ENCODE measurements at regions of chr22 and their contacts with region 1.

Region 1: GRCh38 chr22:37608477-37609239 is at the start of gene GGA1:
- DNase-seq: peak; percentile 95 to 96
- H3K4me3 ChIP-seq: peak within 1 kb of the TSS; percentile 60
- H3K27ac ChIP-seq: peak within 1 kb of the TSS; percentile 99
- H3K4me1 ChIP-seq: peaks cover 43% of the 10 kb centered on the region
- H3K27me3 ChIP-seq: no peaks in the 10 kb centered on the region
- CTCF ChIP-seq: no peak
- total RNA-seq, gene GGA1: 99.2 and 102 TPM in 2 replicates

Region 2: GRCh38 chr22:37472418-37473006 is 136.1 kb before region 1 on chr22:
- CTCF ChIA-PET with region 1: no interaction called
- POLR2A ChIA-PET with region 1: no interaction called
- intact Hi-C with region 1: no loop called
- DNase-seq: peak in 1 of 2 experiments; percentile 56
- H3K4me3 ChIP-seq: no peak overlapping the region
- H3K27ac ChIP-seq: no peak overlapping the region
- H3K4me1 ChIP-seq: no peaks in the 10 kb centered on the region
- H3K27me3 ChIP-seq: no peaks in the 10 kb centered on the region
- CTCF ChIP-seq: peak; percentile 88

Region 3: DNA sequence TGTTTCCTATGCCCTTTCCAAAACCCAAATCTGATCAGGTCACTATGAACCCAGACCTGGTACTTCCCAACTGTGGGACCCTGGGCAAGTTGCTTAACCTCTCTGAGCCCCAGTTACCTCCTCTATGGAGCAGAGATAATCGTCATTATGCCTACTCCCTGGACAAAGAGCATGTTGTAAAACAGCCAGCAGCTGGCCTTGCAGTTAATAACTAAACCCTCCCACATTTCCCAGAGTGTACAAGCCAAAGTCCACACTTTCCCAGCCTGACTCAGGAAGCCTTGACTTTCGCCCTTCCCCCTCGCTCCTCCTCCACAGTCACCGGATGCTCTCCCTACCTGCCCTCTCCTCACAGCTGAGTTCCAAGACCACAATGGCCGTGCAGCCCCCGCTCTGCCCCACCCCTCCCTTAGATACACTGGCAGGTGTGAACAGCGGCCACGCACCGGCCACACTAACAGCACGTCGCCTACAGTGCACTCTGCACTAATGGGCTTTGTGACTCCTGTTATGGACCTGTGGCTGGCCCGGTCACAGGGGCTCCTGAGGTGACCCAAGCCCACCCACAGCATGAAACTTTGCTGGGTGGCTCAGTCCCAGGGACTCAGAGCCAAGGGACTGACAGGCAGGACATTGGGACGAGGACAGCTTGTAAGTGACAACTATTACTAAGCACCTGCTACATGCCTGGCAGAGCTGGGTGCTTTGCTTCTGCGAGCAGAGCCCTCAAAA is 106.9 kb before region 1 on chr22:
- CTCF ChIA-PET with region 1: no interaction called
- POLR2A ChIA-PET with region 1: no interaction called
- intact Hi-C with region 1: no loop called
- DNase-seq: no peak
- H3K4me3 ChIP-seq: no peak overlapping the region
- H3K27ac ChIP-seq: peak overlapping the region; percentile 52; the same call in 1 of the 2 replicates
- H3K4me1 ChIP-seq: peaks cover 43% of the 10 kb centered on the region
- H3K27me3 ChIP-seq: no peaks in the 10 kb centered on the region
- CTCF ChIP-seq: no peak

Region 4: DNA sequence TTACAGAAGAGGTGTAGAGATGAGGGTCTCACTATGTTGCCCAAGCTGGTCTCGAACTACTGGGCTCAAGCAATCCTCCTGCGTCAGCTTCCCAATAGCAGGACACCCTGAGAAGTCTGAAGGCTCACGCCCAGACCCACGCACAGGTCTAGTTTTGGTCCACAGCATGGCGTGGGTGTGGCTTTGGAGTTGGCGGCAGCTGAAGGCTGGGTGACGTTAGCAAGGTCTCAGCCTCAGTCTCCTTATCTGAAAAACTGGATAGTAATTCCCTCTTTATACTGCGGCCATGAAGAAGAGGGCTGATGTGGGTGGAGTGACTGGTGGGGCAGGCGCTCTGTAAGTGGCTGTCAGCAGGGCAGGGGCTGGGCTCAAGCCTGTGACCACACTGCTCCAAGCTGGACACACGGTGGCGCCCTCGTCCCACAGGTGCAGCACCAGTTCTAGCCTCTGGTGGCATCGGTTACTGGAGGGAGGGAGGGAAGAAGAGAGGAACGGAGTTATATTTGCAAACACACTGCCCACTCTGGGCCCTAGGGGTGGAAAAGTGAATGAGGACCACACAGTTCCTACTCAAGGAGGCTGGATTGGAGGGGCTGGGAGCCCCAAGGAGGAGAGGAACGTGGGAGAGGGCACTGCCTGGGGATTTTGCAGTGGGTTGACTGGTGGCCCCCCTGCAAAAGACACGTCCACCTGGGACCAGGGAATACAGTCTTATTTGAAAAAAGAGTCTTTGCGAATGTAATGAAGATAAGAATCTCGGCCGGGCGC is 69.9 kb before region 1 on chr22:
- CTCF ChIA-PET with region 1: interaction called, 12 read pairs
- POLR2A ChIA-PET with region 1: interaction called, 12 read pairs
- intact Hi-C with region 1: loop called (anchors 1 kb)
- DNase-seq: peak; percentile 92 to 95
- H3K4me3 ChIP-seq: no peak overlapping the region
- H3K27ac ChIP-seq: peak overlapping the region; percentile 46
- H3K4me1 ChIP-seq: peaks cover 60% of the 10 kb centered on the region
- H3K27me3 ChIP-seq: no peaks in the 10 kb centered on the region
- CTCF ChIP-seq: peak; percentile 99

Region 5: DNA sequence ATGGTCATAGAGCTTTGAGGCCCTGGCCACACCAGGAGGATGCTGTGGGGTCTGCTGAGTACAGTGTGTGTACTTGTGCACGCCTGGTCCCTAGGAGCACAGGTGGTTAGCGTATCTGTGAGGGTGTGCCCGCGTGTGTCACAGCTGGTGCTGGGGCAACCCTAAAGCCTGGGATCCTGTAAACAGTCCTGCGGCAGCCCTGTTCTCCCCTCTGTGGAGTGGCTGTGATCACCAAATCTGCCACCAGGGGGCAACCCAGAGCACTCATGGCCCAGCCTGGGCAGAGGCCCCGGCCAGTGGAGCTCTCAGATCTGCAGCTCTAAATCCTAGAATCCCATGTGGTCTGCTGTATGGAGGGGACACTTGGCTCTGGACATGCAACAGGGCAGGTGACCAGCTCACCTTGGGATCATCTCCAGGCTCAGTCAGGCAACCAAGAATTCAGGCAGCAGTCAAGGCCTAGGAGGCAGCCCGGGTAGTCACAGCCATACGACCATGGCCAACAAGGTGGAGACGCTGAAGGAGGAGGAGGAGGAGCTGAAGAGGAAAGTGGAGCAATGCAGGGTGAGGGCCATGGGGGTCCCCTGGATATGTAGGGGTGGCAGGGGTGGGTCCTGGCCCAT is 34.7 kb after region 1 on chr22:
- CTCF ChIA-PET with region 1: interaction called, 3 read pairs
- POLR2A ChIA-PET with region 1: no interaction called
- intact Hi-C with region 1: loop called (anchors 1 kb)
- DNase-seq: peak; percentile 65 to 86
- H3K4me3 ChIP-seq: no peak overlapping the region
- H3K27ac ChIP-seq: no peak overlapping the region
- H3K4me1 ChIP-seq: peaks cover 31% of the 10 kb centered on the region
- H3K27me3 ChIP-seq: no peaks in the 10 kb centered on the region
- CTCF ChIP-seq: peak; percentile 99

Region 6: GRCh38 chr22:37752466-37753087 is 143.9 kb after region 1 on chr22:
- CTCF ChIA-PET with region 1: no interaction called
- POLR2A ChIA-PET with region 1: no interaction called
- intact Hi-C with region 1: loop called (anchors 2 kb)
- DNase-seq: peak; percentile 100
- H3K4me3 ChIP-seq: no peak overlapping the region
- H3K27ac ChIP-seq: peak overlapping the region; percentile 95
- H3K4me1 ChIP-seq: peaks cover 74% of the 10 kb centered on the region
- H3K27me3 ChIP-seq: no peaks in the 10 kb centered on the region
- CTCF ChIP-seq: no peak; the same call in 1 of the 2 replicates

Region 7: DNA sequence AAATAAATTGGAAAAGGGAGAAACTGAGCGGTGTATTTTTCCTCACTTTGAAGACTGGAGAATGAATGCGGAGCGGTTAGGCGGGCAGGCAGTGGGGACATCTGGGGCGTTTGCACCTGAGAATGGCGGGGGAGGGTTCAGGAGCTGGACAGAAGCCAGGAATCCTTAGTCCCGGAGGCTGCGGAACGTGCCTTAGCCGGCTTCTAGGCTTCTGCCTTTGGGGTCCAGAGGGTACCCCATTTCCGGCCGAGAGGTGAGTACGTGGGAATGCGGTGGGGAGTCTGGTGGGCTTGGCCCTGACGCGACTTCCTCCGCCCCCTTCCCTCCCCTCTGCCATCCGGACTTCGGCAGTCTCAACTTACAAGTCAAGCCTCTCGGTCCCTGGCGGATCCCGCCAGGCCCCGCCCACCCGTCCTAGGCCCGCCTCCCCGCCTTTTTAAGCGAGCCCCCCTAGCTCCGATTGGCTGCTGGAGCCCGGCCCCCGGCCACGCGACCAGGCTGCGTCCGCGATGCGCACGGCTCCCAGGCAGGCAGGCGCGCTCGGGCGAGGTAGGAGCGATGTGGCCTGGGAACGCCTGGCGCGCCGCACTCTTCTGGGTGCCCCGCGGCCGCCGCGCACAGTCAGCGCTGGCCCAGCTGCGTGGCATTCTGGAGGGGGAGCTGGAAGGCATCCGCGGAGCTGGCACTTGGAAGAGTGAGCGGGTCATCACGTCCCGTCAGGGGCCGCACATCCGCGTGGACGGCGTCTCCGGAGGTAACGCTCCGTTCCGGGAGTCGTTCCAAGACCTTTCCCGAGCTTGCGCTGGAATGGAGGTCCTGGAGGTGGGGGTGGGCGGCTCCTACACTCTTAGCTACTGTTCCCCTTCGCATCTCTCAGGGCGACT is 199.0 kb after region 1 on chr22 and contains the start of gene GCAT:
- CTCF ChIA-PET with region 1: no interaction called
- POLR2A ChIA-PET with region 1: interaction called, 5 read pairs
- intact Hi-C with region 1: loop called (anchors 5 kb)
- DNase-seq: peak; percentile 96
- H3K4me3 ChIP-seq: peak within 1 kb of the TSS; percentile 100
- H3K27ac ChIP-seq: no peak within 1 kb of the TSS
- H3K4me1 ChIP-seq: peaks cover 18% of the 10 kb centered on the region
- H3K27me3 ChIP-seq: no peaks in the 10 kb centered on the region
- CTCF ChIP-seq: no peak
- total RNA-seq, gene GCAT: 32.3 and 37.7 TPM in 2 replicates

Region 8: GRCh38 chr22:37862570-37863325 is 254.1 kb after region 1 on chr22:
- CTCF ChIA-PET with region 1: interaction called, 3 read pairs
- POLR2A ChIA-PET with region 1: interaction called, 9 read pairs
- intact Hi-C with region 1: loop called (anchors 2 kb)
- DNase-seq: no peak
- H3K4me3 ChIP-seq: no peak overlapping the region
- H3K27ac ChIP-seq: no peak overlapping the region
- H3K4me1 ChIP-seq: no peaks in the 10 kb centered on the region
- H3K27me3 ChIP-seq: no peaks in the 10 kb centered on the region
- CTCF ChIP-seq: no peak